B cell (primary cell): ENCODE measurements at regions of chr5 and their contacts with region 1.

Region 1: DNA sequence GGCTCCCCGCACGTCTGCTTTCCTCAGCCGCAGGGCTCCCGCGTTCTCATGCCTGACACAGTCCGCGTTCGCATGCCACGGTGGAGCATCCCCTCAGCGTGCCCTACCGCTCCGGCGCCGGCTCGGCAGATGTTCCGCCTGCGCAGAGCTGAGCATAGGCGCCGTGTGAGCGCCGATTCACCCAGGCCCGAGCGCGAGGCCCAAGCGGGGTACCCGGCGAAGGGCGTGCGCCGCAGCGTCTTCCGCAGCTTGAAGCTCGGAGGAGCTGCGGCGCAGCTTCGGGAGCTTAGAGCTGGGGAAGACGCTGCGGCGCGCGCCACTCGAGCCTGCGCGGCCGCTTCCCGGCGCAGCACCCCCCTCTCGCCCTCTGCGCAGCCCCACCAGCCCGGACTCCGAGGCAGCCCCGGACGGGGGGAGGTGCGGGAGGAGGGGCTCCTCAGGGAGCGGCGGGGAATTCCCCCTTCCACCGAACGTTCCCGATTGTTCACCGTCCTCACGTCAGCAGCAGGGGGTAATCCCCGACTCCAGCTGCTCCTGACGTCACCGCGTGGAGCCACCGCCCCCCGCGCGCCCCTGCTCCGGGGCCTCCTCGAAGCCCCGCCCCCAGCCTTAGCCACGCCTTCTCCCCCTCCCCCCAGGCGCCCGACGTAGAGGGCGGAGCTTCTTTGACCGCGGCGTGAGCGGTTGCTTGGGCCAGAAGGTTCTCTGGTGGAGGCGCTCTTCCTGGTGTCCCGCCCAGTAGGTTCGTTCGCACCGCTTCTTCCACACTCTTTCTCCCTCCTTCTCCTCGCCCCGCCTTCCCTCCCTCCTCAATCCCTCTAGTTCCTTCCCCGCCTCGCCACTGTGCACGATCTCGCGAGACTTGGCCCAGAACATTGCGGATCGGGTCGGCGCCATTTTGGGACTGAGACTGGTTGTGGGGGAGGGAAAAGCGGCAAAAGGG is at the start of gene GPBP1:
- DNase-seq: peak; percentile 99
- ATAC-seq: peak; percentile 76
- H3K4me3 ChIP-seq: peak within 1 kb of the TSS; percentile 87 to 100 (median 97)
- H3K4me3 Mint-ChIP-seq: peak within 1 kb of the TSS; percentile 97
- H3K27ac ChIP-seq: peak within 1 kb of the TSS; percentile 98 to 100
- H3K27ac Mint-ChIP-seq: peak within 1 kb of the TSS; percentile 98
- H3K4me1 ChIP-seq: peaks cover 42 to 46% of the 10 kb centered on the region in 2 donors
- H3K4me1 Mint-ChIP-seq: peaks cover 38% of the 10 kb centered on the region
- H3K27me3 ChIP-seq: no peaks in the 10 kb centered on the region
- H3K27me3 Mint-ChIP-seq: no peaks in the 10 kb centered on the region
- CTCF ChIP-seq: no peak
- total RNA-seq, gene GPBP1: 152 and 159 TPM in 2 replicates

Region 2: GRCh38 chr5:55534436-55535198 is 1638.8 kb before region 1 on chr5 and contains the start of gene PLPP1:
- CTCF ChIA-PET with region 1: no interaction called
- POLR2A ChIA-PET with region 1: no interaction called
- intact Hi-C with region 1: loop called (anchors 10 kb)
- DNase-seq: peak; percentile 92
- ATAC-seq: peak; percentile 78
- H3K4me3 ChIP-seq: peak within 1 kb of the TSS; percentile 71 to 93 (median 89)
- H3K4me3 Mint-ChIP-seq: peak within 1 kb of the TSS; percentile 98
- H3K27ac ChIP-seq: peak within 1 kb of the TSS; percentile 88 to 92
- H3K27ac Mint-ChIP-seq: peak within 1 kb of the TSS; percentile 96
- H3K4me1 ChIP-seq: peaks cover 18 to 23% of the 10 kb centered on the region in 2 donors
- H3K4me1 Mint-ChIP-seq: peaks cover 24% of the 10 kb centered on the region
- H3K27me3 ChIP-seq: no peaks in the 10 kb centered on the region
- H3K27me3 Mint-ChIP-seq: no peaks in the 10 kb centered on the region
- CTCF ChIP-seq: no peak
- total RNA-seq, gene PLPP1: 8.8 and 11.2 TPM in 2 replicates

Region 3: GRCh38 chr5:56415356-56415765 is 758.1 kb before region 1 on chr5:
- CTCF ChIA-PET with region 1: no interaction called
- POLR2A ChIA-PET with region 1: no interaction called
- intact Hi-C with region 1: loop called (anchors 2 kb)
- DNase-seq: peak; percentile 89
- ATAC-seq: peak; percentile 71
- H3K4me3 ChIP-seq: peak overlapping the region in 3 of 5 experiments; percentile 21 to 56 (median 21)
- H3K4me3 Mint-ChIP-seq: peak overlapping the region; percentile 76
- H3K27ac ChIP-seq: peak overlapping the region; percentile 95 to 98
- H3K27ac Mint-ChIP-seq: peak overlapping the region; percentile 96
- H3K4me1 ChIP-seq: peaks cover 73 to 74% of the 10 kb centered on the region in 2 donors
- H3K4me1 Mint-ChIP-seq: peaks cover 80% of the 10 kb centered on the region
- H3K27me3 ChIP-seq: no peaks in the 10 kb centered on the region
- H3K27me3 Mint-ChIP-seq: no peaks in the 10 kb centered on the region
- CTCF ChIP-seq: no peak

Region 4: DNA sequence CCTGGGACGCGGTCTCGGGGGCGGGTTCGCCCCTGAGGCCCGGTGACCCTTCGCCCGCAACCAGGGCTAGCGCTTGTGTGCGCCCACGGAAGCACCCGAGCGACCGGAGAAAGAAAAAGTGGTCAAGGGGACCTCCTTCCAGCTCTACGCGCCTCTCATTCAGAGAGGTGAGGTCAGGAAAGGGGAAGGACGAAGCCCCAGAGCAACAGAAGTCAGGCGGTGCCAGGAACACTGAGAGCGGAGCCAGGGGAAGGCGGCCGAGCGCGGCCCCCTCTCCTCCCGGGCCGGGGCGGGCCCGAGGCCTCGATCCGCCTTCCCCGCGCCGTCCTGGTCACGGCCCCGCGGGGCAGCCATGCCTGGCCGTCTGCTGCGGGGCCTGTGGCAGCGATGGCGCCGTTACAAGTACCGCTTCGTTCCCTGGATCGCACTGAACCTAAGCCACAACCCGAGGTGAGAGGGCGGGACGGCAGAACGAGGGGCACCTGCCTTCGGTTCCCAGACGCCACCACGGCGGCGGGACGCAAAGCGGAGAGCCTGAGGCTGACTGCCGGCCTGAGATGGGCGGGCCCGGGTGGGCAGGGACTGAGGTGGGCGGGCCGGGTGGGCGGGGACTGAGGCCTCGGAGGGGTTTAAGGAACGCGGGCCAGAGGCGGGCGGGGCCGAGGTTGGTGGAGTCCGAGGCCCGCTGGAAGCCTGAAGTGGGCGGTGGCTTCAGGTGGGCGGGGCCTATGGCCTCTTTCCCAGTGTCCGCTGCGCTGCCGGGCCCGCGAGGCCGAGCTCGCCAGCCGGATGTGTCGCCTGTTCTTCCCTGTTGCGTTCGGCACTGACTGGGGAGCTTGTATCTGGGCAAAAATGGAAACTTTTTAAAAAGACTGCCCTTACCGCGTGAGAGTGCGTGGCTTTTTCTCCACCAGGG is 263.9 kb before region 1 on chr5 and contains the start of gene SETD9:
- CTCF ChIA-PET with region 1: interaction called, 6 read pairs
- POLR2A ChIA-PET with region 1: interaction called, 16 read pairs
- intact Hi-C with region 1: loop called (anchors 1 kb)
- DNase-seq: peak; percentile 94
- ATAC-seq: peak; percentile 83
- H3K4me3 ChIP-seq: peak within 1 kb of the TSS; percentile 88 to 99 (median 97)
- H3K4me3 Mint-ChIP-seq: peak within 1 kb of the TSS; percentile 93
- H3K27ac ChIP-seq: peak within 1 kb of the TSS; percentile 78 to 93
- H3K27ac Mint-ChIP-seq: peak within 1 kb of the TSS; percentile 91
- H3K4me1 ChIP-seq: peaks cover 12 to 22% of the 10 kb centered on the region in 2 donors
- H3K4me1 Mint-ChIP-seq: peaks cover 21% of the 10 kb centered on the region
- H3K27me3 ChIP-seq: no peaks in the 10 kb centered on the region
- H3K27me3 Mint-ChIP-seq: no peaks in the 10 kb centered on the region
- CTCF ChIP-seq: no peak
- total RNA-seq, gene SETD9: 7.2 and 9.5 TPM in 2 replicates

Region 5: DNA sequence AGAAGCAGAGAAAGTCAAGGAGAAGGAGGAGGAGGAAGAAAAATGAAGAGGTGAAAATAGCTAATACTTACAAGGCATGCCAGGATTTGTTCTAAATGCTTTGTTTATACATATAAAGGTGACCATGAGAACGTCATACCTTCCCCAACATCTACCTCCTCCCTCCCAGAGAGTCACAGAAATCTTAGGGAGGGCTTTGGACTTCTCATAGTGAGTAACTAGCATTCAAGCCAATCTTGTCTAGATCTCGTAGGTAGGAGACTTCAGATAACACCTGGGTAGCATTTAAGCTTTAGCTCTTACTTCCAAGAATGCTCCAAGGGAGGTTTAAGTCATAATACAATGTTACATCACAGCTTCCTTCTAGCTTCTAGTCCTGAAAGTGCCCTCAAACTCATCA is 36.1 kb before region 1 on chr5:
- CTCF ChIA-PET with region 1: interaction called, 9 read pairs
- POLR2A ChIA-PET with region 1: interaction called, 17 read pairs
- intact Hi-C with region 1: loop called (anchors 2 kb)
- DNase-seq: no peak
- ATAC-seq: no peak
- H3K4me3 ChIP-seq: no peak overlapping the region
- H3K4me3 Mint-ChIP-seq: no peak overlapping the region
- H3K27ac ChIP-seq: no peak overlapping the region
- H3K27ac Mint-ChIP-seq: no peak overlapping the region
- H3K4me1 ChIP-seq: no peaks in the 10 kb centered on the region
- H3K4me1 Mint-ChIP-seq: no peaks in the 10 kb centered on the region
- H3K27me3 ChIP-seq: no peaks in the 10 kb centered on the region
- H3K27me3 Mint-ChIP-seq: peaks cover 12% of the 10 kb centered on the region
- CTCF ChIP-seq: no peak

Region 6: GRCh38 chr5:57221049-57221568 is 47.7 kb after region 1 on chr5:
- CTCF ChIA-PET with region 1: interaction called, 6 read pairs
- POLR2A ChIA-PET with region 1: interaction called, 4 read pairs
- intact Hi-C with region 1: loop called (anchors 1 kb)
- DNase-seq: peak; percentile 82
- ATAC-seq: peak; percentile 65
- H3K4me3 ChIP-seq: no peak overlapping the region
- H3K4me3 Mint-ChIP-seq: peak overlapping the region; percentile 17
- H3K27ac ChIP-seq: peak overlapping the region in 1 of 2 donors; percentile 75
- H3K27ac Mint-ChIP-seq: peak overlapping the region; percentile 21
- H3K4me1 ChIP-seq: peaks cover 3 to 4% of the 10 kb centered on the region in 2 donors
- H3K4me1 Mint-ChIP-seq: peaks cover 33% of the 10 kb centered on the region
- H3K27me3 ChIP-seq: no peaks in the 10 kb centered on the region
- H3K27me3 Mint-ChIP-seq: no peaks in the 10 kb centered on the region
- CTCF ChIP-seq: peak; percentile 96